ENCODE measurements at regions of chrX and their contacts with region 1.

Region 1: DNA sequence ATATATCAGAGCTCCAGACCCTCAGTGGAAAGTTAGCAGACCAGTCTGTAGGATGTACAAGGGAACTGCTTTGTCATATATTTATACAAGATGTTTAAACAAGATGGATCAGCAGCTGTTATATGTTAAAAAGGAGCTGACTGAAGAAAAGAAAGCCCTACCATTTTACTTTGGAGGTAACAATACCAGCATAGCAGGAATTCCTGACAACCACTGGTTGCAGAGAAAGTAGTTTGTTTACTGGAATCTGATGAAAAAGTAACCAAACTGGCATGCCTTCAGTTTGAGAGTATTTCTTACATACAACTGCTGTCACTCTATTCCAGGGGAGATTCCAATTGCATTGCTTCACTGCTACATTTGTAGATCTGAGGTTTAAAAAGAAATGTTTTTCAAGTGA is 49.5 kb upstream of the GABRQ start:
- DNase-seq: peak in 1 of 2 experiments; percentile 64
- H3K4me3 ChIP-seq: no peak overlapping the region
- H3K27ac ChIP-seq: 0 out of 2 replicates have a peak overlapping the region, but pooled peaks have one; percentile 40
- H3K4me1 ChIP-seq: 0 out of 2 replicates have a peak, but pooled peaks cover 7% of the 10 kb centered on the region
- H3K27me3 ChIP-seq: no peaks in the 10 kb centered on the region
- CTCF ChIP-seq: no peak

Region 2: GRCh38 chrX:152451546-152451945 is 136.7 kb before region 1 on chrX:
- CTCF ChIA-PET with region 1: no interaction called
- POLR2A ChIA-PET with region 1: no interaction called
- intact Hi-C with region 1: loop called (anchors 10 kb)
- DNase-seq: peak; percentile 4 to 49
- H3K4me3 ChIP-seq: no peak overlapping the region
- H3K27ac ChIP-seq: no peak overlapping the region
- H3K4me1 ChIP-seq: peaks cover 22% of the 10 kb centered on the region
- H3K27me3 ChIP-seq: no peaks in the 10 kb centered on the region
- CTCF ChIP-seq: no peak

Measured in PC-9 (cell line).